ENCODE measurements at regions of chr19 and their contacts with region 1.

Region 1: DNA sequence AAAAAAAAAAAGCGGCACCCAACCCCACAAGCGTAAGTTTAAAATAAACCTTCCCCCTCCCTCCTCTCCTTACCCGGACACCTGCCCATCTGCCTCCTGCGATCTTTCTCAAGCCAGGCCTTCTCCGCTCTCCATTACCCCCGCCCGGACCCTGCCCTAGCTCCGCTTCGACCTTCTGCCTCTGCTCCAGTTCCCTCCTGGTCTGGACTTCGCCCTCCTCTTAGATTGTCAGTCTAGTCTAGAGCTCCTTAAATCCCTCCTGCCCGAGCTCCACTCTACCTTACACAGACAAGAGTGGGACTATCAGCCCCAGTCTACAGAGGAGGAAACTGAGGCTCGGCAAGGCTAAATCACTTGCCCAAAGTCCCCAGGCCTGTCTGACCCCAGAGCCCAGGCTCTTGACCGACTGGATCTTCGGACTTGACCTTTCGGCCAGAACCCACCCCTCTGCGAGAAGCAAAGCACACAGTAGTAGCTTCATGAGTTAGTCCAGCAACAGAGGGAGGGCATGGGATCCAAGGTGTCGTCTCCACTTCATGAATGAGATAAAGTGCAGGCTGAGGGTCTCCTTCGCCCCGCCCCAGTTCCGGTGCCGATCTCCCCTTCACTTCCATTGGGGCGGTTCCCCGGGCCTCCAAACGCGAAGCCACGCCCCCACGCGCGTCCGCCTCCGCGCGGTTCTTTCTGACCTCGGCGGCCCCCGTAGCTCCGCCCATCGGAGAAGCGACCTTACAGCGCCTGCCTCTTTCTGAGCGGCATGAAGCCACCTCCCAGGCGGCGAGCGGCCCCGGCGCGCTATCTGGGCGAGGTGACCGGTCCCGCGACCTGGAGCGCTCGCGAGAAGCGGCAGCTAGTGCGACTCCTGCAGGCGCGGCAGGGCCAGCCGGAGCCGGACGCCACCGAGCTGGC is at the start of gene SNAPC2:
- DNase-seq: peak; percentile 99
- H3K4me3 Mint-ChIP-seq: peak within 1 kb of the TSS; percentile 94
- H3K27ac Mint-ChIP-seq: peak within 1 kb of the TSS; percentile 98
- H3K4me1 Mint-ChIP-seq: peaks cover 28% of the 10 kb centered on the region
- H3K27me3 Mint-ChIP-seq: peaks cover 28% of the 10 kb centered on the region
- total RNA-seq, gene SNAPC2: 21.8 and 23.2 TPM in 2 replicates

Region 2: GRCh38 chr19:7829561-7830271 is 90.1 kb before region 1 on chr19 and contains the start of gene EVI5L:
- intact Hi-C with region 1: no loop called
- DNase-seq: peak; percentile 100
- H3K4me3 Mint-ChIP-seq: peak within 1 kb of the TSS; percentile 88
- H3K27ac Mint-ChIP-seq: peak within 1 kb of the TSS; percentile 83
- H3K4me1 Mint-ChIP-seq: peaks cover 17% of the 10 kb centered on the region
- H3K27me3 Mint-ChIP-seq: peaks cover 10% of the 10 kb centered on the region
- total RNA-seq, gene EVI5L: 4.3 and 5.2 TPM in 2 replicates

Region 3: DNA sequence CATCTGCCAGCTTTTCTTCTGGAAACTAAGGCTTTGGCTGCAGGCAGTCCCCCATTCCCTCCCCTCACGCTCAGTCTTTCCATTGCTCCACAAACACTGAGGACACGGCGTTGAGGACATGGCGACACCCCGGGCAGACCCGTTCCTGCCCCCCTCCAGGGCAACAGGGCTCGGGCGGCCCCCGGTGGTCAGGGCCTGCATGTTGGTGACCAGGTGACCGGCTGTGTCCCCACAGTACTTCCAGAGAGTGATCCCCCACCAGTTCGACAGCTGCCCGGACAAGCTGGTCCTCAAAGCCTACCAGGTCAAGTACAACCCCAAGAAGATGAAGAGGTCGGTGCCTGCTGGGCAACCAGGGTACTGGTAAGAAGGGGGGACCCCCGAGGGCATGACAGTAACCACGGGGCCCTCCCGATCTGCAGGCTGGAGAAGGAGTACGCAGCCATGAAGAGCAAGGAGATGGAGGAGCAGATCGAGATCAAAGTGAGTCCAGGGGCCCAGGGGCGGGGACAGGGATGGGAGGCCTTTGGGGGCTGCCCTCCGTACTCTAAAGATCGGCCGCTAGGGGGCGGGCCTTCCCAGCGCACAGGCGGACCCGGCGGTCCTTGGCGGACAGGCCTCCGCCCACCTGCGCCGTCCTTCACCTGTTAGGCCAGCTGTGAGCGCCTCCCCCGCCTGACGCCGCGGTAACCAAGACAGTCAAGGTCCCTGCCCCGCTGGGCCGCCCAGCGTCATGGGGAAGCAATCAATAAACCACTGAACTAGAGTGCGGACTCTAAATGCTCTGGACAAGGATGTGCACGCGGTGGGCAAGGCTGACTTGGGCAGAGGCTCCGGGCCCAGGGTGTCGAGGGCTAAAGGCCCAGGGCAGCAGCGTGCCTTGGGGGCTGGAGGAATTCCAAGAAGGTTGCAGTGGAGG is 66.8 kb before region 1 on chr19:
- intact Hi-C with region 1: loop called (anchors 1 kb)
- DNase-seq: peak; percentile 91
- H3K4me3 Mint-ChIP-seq: no peak overlapping the region
- H3K27ac Mint-ChIP-seq: no peak overlapping the region
- H3K4me1 Mint-ChIP-seq: peaks cover 5% of the 10 kb centered on the region
- H3K27me3 Mint-ChIP-seq: no peaks in the 10 kb centered on the region

Region 4: DNA sequence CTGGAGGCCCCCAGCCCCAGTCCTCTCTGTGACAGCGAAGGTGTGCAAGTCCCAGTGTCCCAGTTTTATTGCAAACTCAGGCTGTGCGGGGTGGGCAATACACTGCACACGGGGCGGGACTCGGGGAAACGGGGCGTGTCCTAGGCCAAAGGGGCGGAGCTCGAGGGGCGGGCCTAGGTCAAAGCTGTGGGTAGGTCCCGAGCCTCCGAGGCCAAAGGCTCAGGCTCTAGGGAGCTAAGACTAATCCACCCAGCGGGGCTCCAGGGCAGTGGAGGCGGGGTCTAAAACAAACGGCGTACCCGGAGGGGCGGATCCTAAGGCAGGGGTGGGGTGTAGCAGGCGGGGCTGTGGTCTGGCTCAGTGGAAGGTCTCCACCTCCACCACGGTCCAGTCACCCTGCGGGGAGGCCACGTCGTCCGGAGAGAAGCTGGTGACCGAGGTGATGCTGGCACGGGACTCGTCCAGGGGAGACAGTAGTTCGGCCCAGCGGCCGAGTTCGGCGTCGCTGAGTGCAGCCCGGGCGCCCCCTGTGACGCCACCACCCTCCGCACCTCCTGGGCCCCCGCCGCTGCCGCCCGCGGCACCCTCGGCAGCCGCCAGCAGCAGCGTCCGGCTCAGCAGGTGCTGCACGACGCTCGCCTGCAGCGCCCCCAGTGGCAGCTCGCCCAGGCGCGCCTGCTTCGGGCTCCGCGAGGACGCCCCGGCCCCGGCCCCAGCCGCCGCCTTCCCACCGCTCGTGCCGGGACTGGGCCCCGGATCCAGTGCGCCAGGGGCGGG is 51.0 kb before region 1 on chr19:
- intact Hi-C with region 1: loop called (anchors 1 kb)
- DNase-seq: peak; percentile 95
- H3K4me3 Mint-ChIP-seq: peak overlapping the region; percentile 80
- H3K27ac Mint-ChIP-seq: peak overlapping the region; percentile 36
- H3K4me1 Mint-ChIP-seq: peaks cover 30% of the 10 kb centered on the region
- H3K27me3 Mint-ChIP-seq: peaks cover 38% of the 10 kb centered on the region

Region 5: DNA sequence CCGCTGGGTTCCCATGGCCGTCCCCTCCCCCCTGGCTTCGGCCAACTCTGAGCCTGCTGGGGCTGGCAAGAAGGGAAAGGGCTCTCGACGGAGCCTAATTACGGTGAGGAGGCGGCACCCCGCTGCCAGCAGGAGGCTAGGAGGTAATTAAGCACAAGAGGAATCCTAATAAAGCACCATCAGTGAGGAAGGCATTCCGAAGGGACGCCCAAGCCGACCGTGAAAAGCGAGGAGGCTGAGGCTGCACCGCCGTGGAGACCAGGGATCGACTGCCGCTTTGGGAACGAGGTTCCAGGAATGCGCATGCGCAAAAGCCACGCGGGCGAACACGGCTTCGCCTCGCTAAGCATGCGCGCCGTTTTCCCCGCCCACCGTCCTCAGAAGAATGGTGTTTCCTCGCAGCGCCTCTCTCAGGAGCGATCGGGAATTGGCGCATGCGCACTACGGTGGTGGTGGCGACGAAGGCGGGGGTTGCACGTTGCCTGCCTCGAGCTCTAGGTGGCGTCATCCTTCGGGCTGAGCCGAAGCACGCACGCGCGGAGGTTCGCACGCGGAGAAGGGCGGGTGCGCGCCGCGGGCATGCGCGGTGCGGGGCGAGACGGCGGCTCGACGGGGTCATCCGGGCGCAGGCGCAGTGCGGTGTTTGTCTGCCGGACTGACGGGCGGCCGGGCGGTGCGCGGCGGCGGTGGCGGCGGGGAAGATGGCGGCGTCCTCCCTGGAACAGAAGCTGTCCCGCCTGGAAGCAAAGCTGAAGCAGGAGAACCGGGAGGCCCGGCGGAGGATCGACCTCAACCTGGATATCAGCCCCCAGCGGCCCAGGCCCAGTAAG is 16.4 kb before region 1 on chr19 and contains the start of gene MAP2K7:
- intact Hi-C with region 1: loop called (anchors 1 kb)
- DNase-seq: peak; percentile 100
- H3K4me3 Mint-ChIP-seq: peak within 1 kb of the TSS; percentile 93
- H3K27ac Mint-ChIP-seq: peak within 1 kb of the TSS; percentile 96
- H3K4me1 Mint-ChIP-seq: peaks cover 25% of the 10 kb centered on the region
- H3K27me3 Mint-ChIP-seq: peaks cover 3% of the 10 kb centered on the region
- total RNA-seq, gene MAP2K7: 46.7 and 47.6 TPM in 2 replicates

Region 6: DNA sequence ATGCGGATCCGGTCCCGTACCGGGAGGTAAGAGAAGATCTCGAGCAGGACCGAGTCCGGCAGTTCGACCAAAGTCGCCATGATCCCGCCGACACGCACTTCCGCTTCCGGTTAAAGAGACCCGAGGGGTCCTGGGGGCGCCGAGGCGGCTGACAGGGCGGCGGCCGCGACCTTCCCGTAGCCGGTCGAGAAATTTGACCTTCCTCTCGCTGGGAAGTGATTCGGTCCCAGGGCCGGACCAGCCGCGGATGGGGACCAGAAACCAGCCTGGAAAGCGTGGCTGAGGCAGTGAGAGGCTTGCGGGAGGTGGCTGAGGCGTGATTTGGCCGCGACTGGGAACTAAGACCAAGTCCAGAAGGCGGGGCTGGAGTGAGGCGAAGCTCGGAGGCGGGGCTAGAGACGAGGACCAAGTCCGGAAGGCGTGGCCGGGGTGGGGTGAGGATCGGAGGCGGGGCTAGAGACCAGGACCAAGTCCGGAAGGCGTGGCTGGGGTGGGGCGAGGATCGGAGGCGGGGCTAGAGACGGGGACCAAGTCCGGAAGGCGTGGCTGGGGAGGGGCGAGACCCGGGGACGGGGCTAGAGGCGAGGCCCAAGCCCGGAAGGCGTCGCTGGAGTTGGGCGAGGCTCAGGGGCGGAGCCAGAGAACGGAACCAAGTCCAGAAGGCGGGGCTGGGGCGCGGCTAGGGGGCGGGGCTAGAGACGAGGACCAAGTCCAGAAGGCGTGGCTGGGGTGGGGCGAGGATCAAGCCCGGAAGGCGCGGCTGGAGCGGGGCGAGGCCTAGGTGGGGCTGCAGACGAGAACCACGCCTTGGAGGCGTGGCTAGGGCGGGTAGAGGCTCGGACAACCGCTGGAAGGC is 1899.1 kb after region 1 on chr19 and contains the start of gene FBXL12:
- intact Hi-C with region 1: loop called (anchors 2 kb)
- DNase-seq: peak; percentile 100
- H3K4me3 Mint-ChIP-seq: peak within 1 kb of the TSS; percentile 93
- H3K27ac Mint-ChIP-seq: peak within 1 kb of the TSS; percentile 94
- H3K4me1 Mint-ChIP-seq: peaks cover 22% of the 10 kb centered on the region
- H3K27me3 Mint-ChIP-seq: no peaks in the 10 kb centered on the region
- total RNA-seq, gene FBXL12: 19.4 and 23.3 TPM in 2 replicates

Measured in activated CD4-positive, alpha-beta T cell treated with anti-CD3 and anti-CD28 coated beads, Interleukin-2, amount 10 ng/mL, durations not matched to agents 24 days and 14 days (primary cell).